Naive thymus-derived CD4-positive, alpha-beta T cell (primary cell): ENCODE measurements at regions of chr10 and their contacts with region 1.

Region 1: GRCh38 chr10:35642027-35642792 is at the start of gene FZD8:
- DNase-seq: peak; percentile 35 to 77 (median 58)
- ATAC-seq: peak; percentile 87
- H3K4me3 ChIP-seq: peak within 1 kb of the TSS; percentile 80
- H3K4me3 Mint-ChIP-seq: peak within 1 kb of the TSS; percentile 81 to 94 (median 88)
- H3K27ac ChIP-seq: no peak within 1 kb of the TSS
- H3K27ac Mint-ChIP-seq: peak within 1 kb of the TSS in 5 of 9 donors; percentile 4 to 49 (median 42)
- H3K4me1 ChIP-seq: peaks cover 4 to 5% of the 10 kb centered on the region in 2 donors
- H3K4me1 Mint-ChIP-seq: peaks cover 9 to 42% (median 22%) of the 10 kb centered on the region in 7 donors
- H3K27me3 ChIP-seq: peaks cover 3 to 9% of the 10 kb centered on the region in 2 donors
- H3K27me3 Mint-ChIP-seq: peaks cover 7 to 79% (median 26%) of the 10 kb centered on the region in 5 donors
- total RNA-seq, gene FZD8: 0.19 to 1.7 (median 0.47) TPM

Region 2: GRCh38 chr10:35090162-35090954 is 551.9 kb before region 1 on chr10 and contains the start of gene CUL2:
- CTCF ChIA-PET with region 1: no interaction called
- POLR2A ChIA-PET with region 1: no interaction called
- intact Hi-C with region 1: loop called (anchors 1 to 2 kb)
- DNase-seq: peak; percentile 85 to 98 (median 94)
- ATAC-seq: peak; percentile 96
- H3K4me3 ChIP-seq: peak within 1 kb of the TSS; percentile 65
- H3K4me3 Mint-ChIP-seq: peak within 1 kb of the TSS; percentile 84 to 99 (median 94)
- H3K27ac ChIP-seq: peak within 1 kb of the TSS; percentile 98
- H3K27ac Mint-ChIP-seq: peak within 1 kb of the TSS; percentile 91 to 99 (median 97)
- H3K4me1 ChIP-seq: peaks cover 35 to 41% of the 10 kb centered on the region in 2 donors
- H3K4me1 Mint-ChIP-seq: peaks cover 31 to 55% (median 52%) of the 10 kb centered on the region in 7 donors
- H3K27me3 ChIP-seq: no peaks in the 10 kb centered on the region
- H3K27me3 Mint-ChIP-seq: peaks cover 0 to 8% (median 0%) of the 10 kb centered on the region in 5 donors
- total RNA-seq, gene CUL2: 30.9 to 43.7 (median 36.0) TPM

Region 3: GRCh38 chr10:35447693-35448407 is 194.4 kb before region 1 on chr10:
- CTCF ChIA-PET with region 1: no interaction called
- POLR2A ChIA-PET with region 1: no interaction called
- intact Hi-C with region 1: loop called in 1 of 2 experiments (anchors 10 kb)
- DNase-seq: peak in 7 of 9 donors; percentile 57 to 80 (median 73)
- ATAC-seq: peak; percentile 78
- H3K4me3 ChIP-seq: peak overlapping the region; percentile 38
- H3K4me3 Mint-ChIP-seq: peak overlapping the region; percentile 73 to 89 (median 82)
- H3K27ac ChIP-seq: peak overlapping the region; percentile 65
- H3K27ac Mint-ChIP-seq: peak overlapping the region; percentile 91 to 99 (median 97)
- H3K4me1 ChIP-seq: peaks cover 30 to 62% of the 10 kb centered on the region in 2 donors
- H3K4me1 Mint-ChIP-seq: peaks cover 56 to 83% (median 80%) of the 10 kb centered on the region in 7 donors
- H3K27me3 ChIP-seq: no peaks in the 10 kb centered on the region
- H3K27me3 Mint-ChIP-seq: no peaks in the 10 kb centered on the region